Gastrocnemius medialis (tissue), 4 donors: ENCODE measurements at regions of chr21 and their contacts with region 1.

Region 1: GRCh38 chr21:41425954-41426675 is at the start of gene MX1:
- DNase-seq: peak in 1 of 2 donors; percentile 22
- ATAC-seq: peak; percentile 53 to 56
- H3K4me3 ChIP-seq: peak within 1 kb of the TSS; percentile 56 to 76 (median 65)
- H3K27ac ChIP-seq: peak within 1 kb of the TSS; percentile 16 to 76 (median 70)
- H3K4me1 ChIP-seq: peaks cover 0 to 6% of the 10 kb centered on the region in 2 donors
- H3K27me3 ChIP-seq: peaks cover 2 to 9% (median 7%) of the 10 kb centered on the region in 3 donors
- CTCF ChIP-seq: no peak
- POLR2A ChIP-seq: peak; percentile 43 to 64
- total RNA-seq, gene MX1: 2.5 to 10.0 (median 5.7) TPM

Region 2: DNA sequence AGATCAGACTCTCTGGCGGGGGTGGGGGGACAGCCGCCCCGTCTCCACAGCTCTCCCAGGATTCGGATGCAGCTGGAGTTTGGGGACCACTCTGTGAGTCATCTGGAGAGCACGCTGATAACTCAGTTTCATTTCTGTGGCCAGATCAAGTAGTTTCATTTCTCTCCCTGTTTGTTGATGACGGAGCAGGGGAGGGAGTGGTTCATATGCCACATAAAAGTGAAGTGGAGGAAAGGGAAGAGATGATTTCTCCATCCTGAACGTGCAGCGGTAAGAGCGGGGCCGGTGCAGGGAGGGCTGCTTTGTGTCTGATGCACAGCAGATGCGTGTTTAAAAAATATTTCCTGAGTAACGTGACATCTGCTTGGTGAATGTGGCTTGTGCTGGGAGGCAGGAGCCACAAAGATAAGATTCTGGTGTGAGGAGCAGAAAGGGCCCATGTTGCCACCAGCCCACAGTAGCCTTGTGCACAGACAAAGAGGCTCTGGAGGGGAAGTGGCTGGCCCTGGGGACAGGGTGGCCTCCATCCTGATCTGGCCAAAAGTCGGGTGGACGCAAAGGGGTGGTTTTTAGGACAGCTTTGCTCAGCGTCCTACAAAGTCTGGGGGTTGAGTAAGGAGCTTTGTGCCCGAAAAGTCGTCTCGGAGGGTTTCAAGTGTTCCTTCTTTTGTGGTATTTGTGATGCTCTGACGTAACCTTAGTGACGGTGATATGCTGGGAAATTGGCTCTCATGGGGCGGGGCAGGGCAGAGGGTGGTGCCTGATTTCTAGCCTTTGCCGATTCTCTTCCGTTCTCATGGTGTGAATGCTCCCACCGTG is 64.1 kb before region 1 on chr21 and contains the start of gene MX2:
- in situ Hi-C with region 1: no loop called
- intact Hi-C with region 1: loop called (anchors 5 kb)
- DNase-seq: peak; percentile 59 to 68
- ATAC-seq: peak; percentile 82
- H3K4me3 ChIP-seq: peak within 1 kb of the TSS; percentile 43 to 49 (median 46)
- H3K27ac ChIP-seq: peak within 1 kb of the TSS; percentile 75 to 84 (median 81)
- H3K4me1 ChIP-seq: no peaks in the 10 kb centered on the region
- H3K27me3 ChIP-seq: peaks cover 0 to 3% (median 0%) of the 10 kb centered on the region in 3 donors
- CTCF ChIP-seq: no peak
- POLR2A ChIP-seq: peak; percentile 12 to 41
- total RNA-seq, gene MX2: 1.1 to 6.8 (median 2.2) TPM